ENCODE measurements at regions of chr22 and their contacts with region 1.

Region 1: DNA sequence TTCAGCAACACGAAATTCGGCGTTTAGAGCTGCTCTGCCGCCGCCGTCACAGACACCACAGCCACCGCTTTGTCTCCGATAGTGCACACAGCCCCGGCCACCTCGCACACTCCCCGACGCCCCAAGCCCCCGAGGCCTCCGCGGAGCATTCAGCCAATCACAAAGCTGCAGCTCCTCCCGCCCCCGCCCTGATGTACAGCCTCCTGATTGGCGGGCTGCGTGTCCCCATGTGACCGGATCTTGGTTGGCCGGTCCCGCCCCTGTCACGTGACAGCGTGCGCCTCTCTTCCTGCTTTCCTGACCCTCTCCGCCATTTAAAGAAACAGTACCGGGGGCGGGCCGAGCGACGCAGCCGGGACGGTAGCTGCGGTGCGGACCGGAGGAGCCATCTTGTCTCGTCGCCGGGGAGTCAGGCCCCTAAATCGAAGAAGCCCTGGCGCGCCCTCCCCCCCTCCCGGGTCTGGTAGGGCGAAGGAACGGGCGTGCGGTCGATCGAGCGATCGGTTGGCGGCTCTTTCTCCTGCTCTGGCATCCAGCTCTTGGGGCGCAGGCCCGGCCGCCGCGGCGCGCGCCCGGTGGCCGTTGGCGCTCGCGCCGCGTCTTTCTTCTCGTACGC is at the start of gene TUG1:
- DNase-seq: peak; percentile 96
- ATAC-seq: peak; percentile 89
- H3K4me3 ChIP-seq: peak within 1 kb of the TSS; percentile 72 to 83
- H3K27ac ChIP-seq: peak within 1 kb of the TSS; percentile 92
- H3K4me1 ChIP-seq: peaks cover 9 to 22% of the 10 kb centered on the region in 2 experiments
- H3K27me3 ChIP-seq: no peaks in the 10 kb centered on the region
- CTCF ChIP-seq: no peak
- POLR2A ChIP-seq: no peak
- RAD21 ChIP-seq: no peak
- total RNA-seq, gene TUG1: 45.0 TPM

Region 2: GRCh38 chr22:31046539-31047226 is 77.7 kb after region 1 on chr22:
- CTCF ChIA-PET with region 1: no interaction called
- POLR2A ChIA-PET with region 1: no interaction called
- RAD21 ChIA-PET with region 1: no interaction called
- intact Hi-C with region 1: no loop called
- DNase-seq: no peak
- ATAC-seq: no peak
- H3K4me3 ChIP-seq: no peak overlapping the region
- H3K27ac ChIP-seq: no peak overlapping the region
- H3K4me1 ChIP-seq: no peaks in the 10 kb centered on the region
- H3K27me3 ChIP-seq: no peaks in the 10 kb centered on the region
- CTCF ChIP-seq: no peak
- POLR2A ChIP-seq: no peak
- RAD21 ChIP-seq: no peak

Region 3: DNA sequence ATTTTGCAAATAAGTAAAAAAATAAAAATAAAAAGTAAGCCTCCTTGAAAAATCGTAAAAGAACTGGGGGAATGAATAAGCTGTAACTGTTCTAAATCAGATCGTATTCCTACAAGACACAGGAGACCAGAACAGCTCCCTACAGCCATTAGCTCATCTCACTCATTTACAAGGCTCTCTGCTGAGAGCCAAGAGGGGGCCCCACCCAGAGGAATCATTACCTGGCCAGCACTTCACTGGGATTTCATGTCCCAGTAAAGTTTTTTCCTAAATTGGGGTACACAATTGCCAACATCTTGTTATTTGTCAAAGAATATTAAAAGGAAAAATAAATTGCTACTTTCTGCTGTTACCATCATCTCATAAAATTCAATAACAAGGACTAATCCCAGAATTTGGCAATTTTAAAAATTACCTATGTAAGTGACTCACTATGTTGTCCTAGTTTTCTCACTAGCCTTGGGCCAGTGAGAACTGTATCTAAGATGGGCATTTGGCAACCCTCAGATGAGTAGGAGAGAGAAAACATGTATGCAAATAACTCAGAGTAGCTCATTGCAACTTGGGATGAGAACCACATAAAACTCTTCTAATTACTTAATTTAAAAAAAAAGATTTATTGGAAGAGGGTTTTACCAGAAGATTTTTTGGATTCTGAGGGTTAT is 93.7 kb after region 1 on chr22:
- CTCF ChIA-PET with region 1: no interaction called
- POLR2A ChIA-PET with region 1: interaction called, 10 read pairs
- RAD21 ChIA-PET with region 1: no interaction called
- intact Hi-C with region 1: no loop called
- DNase-seq: no peak
- ATAC-seq: no peak
- H3K4me3 ChIP-seq: no peak overlapping the region
- H3K27ac ChIP-seq: peak overlapping the region; percentile 72; the same call in 1 of the 2 replicates
- H3K4me1 ChIP-seq: peaks cover 9 to 31% of the 10 kb centered on the region in 2 experiments; a peak in 3 of 4 replicates
- H3K27me3 ChIP-seq: no peaks in the 10 kb centered on the region
- CTCF ChIP-seq: no peak
- POLR2A ChIP-seq: no peak
- RAD21 ChIP-seq: no peak

Measured in HCT116 (cell line).